Right lobe of liver (tissue), 6 donors: ENCODE measurements at regions of chr5 and their contacts with region 1.

Region 1: GRCh38 chr5:158686214-158686613 is 413.5 kb downstream of the EBF1 start:
- DNase-seq: no peak
- ATAC-seq: no peak
- H3K4me3 ChIP-seq: no peak overlapping the region
- H3K27ac ChIP-seq: no peak overlapping the region
- H3K4me1 ChIP-seq: no peaks in the 10 kb centered on the region
- H3K27me3 ChIP-seq: no peaks in the 10 kb centered on the region
- CTCF ChIP-seq: no peak
- POLR2A ChIP-seq: no peak

Region 2: GRCh38 chr5:159240301-159240870 is 554.2 kb after region 1 on chr5:
- intact Hi-C with region 1: loop called in 1 of 2 experiments (anchors 5 kb)
- DNase-seq: no peak
- ATAC-seq: no peak
- H3K4me3 ChIP-seq: no peak overlapping the region
- H3K27ac ChIP-seq: no peak overlapping the region
- H3K4me1 ChIP-seq: no peaks in the 10 kb centered on the region
- H3K27me3 ChIP-seq: no peaks in the 10 kb centered on the region
- CTCF ChIP-seq: no peak
- POLR2A ChIP-seq: no peak